Calu3 (cell line): ENCODE measurements at regions of chr12 and their contacts with region 1.

Region 1: GRCh38 chr12:33488036-33488435 is 48.4 kb upstream of the SYT10 start:
- DNase-seq: peak; percentile 26
- H3K4me3 Mint-ChIP-seq: no peak overlapping the region
- H3K27ac Mint-ChIP-seq: no peak overlapping the region
- H3K4me1 Mint-ChIP-seq: peaks cover 31% of the 10 kb centered on the region
- H3K27me3 Mint-ChIP-seq: no peaks in the 10 kb centered on the region
- CTCF ChIP-seq: no peak

Region 2: DNA sequence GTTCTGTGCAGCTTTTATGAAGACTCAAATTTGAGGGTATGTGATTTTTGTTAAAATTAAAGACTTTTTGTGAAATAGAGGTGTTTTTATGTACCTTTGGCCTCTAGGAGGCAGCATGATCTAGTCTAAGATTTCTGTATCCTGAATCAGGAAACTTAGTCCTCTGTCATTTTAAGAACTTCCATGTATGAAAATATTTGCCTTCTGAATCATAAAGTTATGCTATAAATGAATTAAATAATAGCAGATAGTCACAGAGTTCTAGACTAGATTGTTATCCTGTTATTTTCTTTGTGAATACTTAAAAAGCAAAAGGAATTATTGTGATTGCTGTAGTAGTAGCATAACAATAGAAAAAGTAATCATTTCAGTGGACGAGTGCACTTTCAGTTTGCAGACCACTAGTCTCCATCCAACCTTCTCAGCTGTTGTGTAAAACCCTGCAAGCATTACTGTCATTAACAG is 1032.4 kb before region 1 on chr12:
- CTCF ChIA-PET with region 1: no interaction called
- intact Hi-C with region 1: no loop called
- DNase-seq: peak; percentile 46
- H3K4me3 Mint-ChIP-seq: no peak overlapping the region
- H3K27ac Mint-ChIP-seq: no peak overlapping the region
- H3K4me1 Mint-ChIP-seq: peaks cover 36% of the 10 kb centered on the region
- H3K27me3 Mint-ChIP-seq: no peaks in the 10 kb centered on the region
- CTCF ChIP-seq: no peak

Region 3: GRCh38 chr12:33439282-33440011 is 48.6 kb before region 1 on chr12 and contains the start of gene SYT10:
- CTCF ChIA-PET with region 1: no interaction called
- intact Hi-C with region 1: loop called (anchors 5 kb)
- DNase-seq: peak; percentile 30
- H3K4me3 Mint-ChIP-seq: peak within 1 kb of the TSS; percentile 88
- H3K27ac Mint-ChIP-seq: peak within 1 kb of the TSS; percentile 75
- H3K4me1 Mint-ChIP-seq: no peaks in the 10 kb centered on the region
- H3K27me3 Mint-ChIP-seq: no peaks in the 10 kb centered on the region
- CTCF ChIP-seq: no peak
- total RNA-seq, gene SYT10: 2.9 and 4.8 TPM in 2 replicates

Region 4: GRCh38 chr12:33587870-33588712 is 100.1 kb after region 1 on chr12:
- CTCF ChIA-PET with region 1: no interaction called
- intact Hi-C with region 1: loop called (anchors 5 kb)
- DNase-seq: peak; percentile 30
- H3K4me3 Mint-ChIP-seq: peak overlapping the region; percentile 32
- H3K27ac Mint-ChIP-seq: peak overlapping the region; percentile 57
- H3K4me1 Mint-ChIP-seq: peaks cover 25% of the 10 kb centered on the region
- H3K27me3 Mint-ChIP-seq: no peaks in the 10 kb centered on the region
- CTCF ChIP-seq: no peak